Left colon (tissue), 2 donors: ENCODE measurements at regions of chr6 and their contacts with region 1.

Region 1: DNA sequence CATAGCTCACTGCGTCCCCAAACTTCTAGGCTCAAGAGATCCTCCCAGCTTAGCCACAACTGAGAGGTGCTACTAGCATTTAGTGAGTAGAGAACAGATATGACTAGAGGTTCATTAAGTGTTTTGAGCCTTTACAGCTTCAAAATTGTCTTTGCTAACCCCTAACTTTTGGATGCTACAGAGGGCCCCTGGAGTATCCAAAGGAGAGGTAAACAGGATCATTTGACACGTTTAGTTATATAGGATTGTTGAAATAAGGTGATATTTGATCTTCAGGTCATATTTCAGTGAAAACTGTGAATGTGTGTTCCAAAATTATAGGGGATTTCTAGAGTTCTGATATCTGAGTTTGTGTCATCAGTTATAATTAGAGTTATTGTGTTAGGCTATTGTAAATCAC is 19.2 kb upstream of the HFE start:
- DNase-seq: no peak
- ATAC-seq: no peak

Region 2: DNA sequence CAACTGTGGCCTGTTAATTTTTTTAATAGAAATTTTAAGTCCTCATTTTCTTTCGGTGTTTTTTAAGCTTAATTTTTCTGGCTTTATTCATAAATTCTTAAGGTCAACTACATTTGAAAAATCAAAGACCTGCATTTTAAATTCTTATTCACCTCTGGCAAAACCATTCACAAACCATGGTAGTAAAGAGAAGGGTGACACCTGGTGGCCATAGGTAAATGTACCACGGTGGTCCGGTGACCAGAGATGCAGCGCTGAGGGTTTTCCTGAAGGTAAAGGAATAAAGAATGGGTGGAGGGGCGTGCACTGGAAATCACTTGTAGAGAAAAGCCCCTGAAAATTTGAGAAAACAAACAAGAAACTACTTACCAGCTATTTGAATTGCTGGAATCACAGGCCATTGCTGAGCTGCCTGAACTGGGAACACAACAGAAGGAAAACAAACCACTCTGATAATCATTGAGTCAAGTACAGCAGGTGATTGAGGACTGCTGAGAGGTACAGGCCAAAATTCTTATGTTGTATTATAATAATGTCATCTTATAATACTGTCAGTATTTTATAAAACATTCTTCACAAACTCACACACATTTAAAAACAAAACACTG is 29.3 kb after region 1 on chr6:
- intact Hi-C with region 1: loop called in 1 of 2 experiments (anchors 2 kb)
- DNase-seq: peak; percentile 49 to 67
- ATAC-seq: peak; percentile 91

Region 3: GRCh38 chr6:26170951-26171841 is 103.2 kb after region 1 on chr6:
- intact Hi-C with region 1: no loop called
- DNase-seq: no peak
- ATAC-seq: no peak